ENCODE measurements at regions of chr3 and their contacts with region 1.

Region 1: DNA sequence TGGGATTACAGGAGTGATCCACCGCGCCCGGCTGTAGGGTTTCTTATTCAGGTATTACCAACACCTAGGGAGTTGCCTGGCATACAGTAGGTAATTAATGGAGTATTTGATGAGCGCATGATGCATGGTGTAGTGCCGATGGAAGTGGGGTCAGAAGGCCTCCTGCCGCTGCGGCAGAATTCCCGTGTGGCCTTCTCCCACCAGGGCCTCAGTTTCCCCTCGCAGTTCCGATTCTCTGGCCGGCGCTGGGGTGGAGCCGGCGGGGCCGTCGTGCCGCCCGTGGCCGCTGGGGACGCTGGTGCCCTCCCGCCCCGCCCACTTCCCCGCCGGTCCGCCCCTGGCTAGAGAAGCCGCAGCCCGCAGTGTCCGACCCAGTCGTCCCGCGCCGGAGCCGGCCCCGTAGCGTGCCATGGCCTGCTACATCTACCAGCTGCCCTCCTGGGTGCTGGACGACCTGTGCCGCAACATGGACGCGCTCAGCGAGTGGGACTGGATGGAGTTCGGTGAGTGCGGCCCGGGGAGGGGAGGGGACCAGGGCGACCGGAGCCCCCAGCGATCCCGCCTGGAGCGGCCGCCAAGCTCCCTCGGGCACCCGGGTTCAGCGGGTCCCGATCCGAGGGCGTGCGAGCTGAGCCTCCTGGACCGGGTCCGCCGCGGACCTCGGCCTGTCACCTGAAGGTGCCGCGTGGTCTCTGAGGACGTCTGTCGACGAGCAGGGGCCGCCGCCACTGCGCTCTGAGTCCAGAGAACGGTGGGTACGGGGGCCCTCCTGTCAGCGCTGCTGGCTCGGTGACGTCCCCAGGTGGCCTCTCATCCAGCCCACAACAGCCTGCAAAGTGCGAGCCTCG is at the start of gene IRAK2:
- DNase-seq: peak; percentile 84
- ATAC-seq: peak; percentile 97
- total RNA-seq, gene IRAK2: 1.7 to 1.8 TPM

Region 2: GRCh38 chr3:9965200-9965875 is 199.4 kb before region 1 on chr3:
- intact Hi-C with region 1: no loop called
- DNase-seq: no peak
- ATAC-seq: no peak

Region 3: DNA sequence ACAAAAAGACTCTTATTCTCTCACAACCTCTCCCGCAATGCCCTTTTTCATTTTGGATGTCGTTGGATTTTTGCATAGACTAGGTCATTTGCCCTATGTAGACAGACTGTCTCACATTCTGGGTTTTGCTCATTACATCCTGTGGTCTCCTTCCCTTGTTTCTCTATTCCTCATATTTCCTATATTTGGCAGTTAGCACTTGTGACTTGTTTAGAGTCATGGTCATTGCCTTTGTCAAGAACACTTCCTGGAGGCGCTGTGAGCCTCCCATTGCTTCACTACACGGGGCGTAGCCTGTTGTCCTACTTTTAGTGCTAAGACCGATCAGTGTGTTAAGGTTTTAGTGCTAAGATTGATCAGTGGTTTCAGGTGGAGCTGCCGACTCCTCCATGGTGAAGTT is 67.4 kb after region 1 on chr3:
- intact Hi-C with region 1: loop called in 1 of 2 experiments (anchors 10 kb)
- DNase-seq: no peak
- ATAC-seq: peak; percentile 41 to 61

Region 4: DNA sequence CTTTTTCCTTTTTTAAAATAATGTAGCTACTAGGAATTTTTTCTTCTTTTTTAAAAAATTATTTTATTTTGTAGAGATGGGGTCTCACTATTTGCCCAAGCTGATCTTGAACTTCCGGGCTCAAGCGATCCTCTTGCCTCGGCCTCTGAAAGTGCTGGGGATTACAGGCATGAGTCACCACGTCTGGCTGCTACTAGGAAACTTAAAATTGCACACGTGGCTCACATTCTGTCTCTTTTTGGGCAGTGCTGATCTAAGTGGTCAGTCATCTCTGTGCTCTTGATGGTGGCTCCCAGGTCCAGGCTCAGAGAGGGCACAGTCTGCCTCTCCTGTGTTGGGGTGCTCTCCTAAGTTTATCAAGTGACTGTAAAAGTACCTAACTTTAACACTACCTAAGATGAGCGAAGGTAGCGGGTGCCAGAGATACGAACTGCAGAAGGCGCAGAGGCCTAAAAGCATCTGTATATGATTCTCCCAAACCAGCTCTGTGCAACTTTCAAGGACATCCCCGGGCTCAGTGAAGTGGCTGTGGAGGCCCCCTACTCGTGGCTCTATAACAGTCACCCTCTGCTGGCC is 209.0 kb after region 1 on chr3:
- intact Hi-C with region 1: no loop called
- DNase-seq: no peak
- ATAC-seq: no peak

Measured in left cardiac atrium (tissue), 4 donors.